Right cardiac atrium (tissue), 5 donors: ENCODE measurements at regions of chr20 and their contacts with region 1.

Region 1: GRCh38 chr20:49982346-49983122 is at the start of gene SNAI1:
- DNase-seq: peak; percentile 85 to 93 (median 92)
- ATAC-seq: peak; percentile 80 to 85
- H3K4me3 ChIP-seq: peak within 1 kb of the TSS; percentile 69
- H3K27ac ChIP-seq: peak within 1 kb of the TSS; percentile 31
- H3K4me1 ChIP-seq: peaks cover 1% of the 10 kb centered on the region
- H3K27me3 ChIP-seq: no peaks in the 10 kb centered on the region
- total RNA-seq, gene SNAI1: 2.9 to 6.0 (median 3.4) TPM

Region 2: DNA sequence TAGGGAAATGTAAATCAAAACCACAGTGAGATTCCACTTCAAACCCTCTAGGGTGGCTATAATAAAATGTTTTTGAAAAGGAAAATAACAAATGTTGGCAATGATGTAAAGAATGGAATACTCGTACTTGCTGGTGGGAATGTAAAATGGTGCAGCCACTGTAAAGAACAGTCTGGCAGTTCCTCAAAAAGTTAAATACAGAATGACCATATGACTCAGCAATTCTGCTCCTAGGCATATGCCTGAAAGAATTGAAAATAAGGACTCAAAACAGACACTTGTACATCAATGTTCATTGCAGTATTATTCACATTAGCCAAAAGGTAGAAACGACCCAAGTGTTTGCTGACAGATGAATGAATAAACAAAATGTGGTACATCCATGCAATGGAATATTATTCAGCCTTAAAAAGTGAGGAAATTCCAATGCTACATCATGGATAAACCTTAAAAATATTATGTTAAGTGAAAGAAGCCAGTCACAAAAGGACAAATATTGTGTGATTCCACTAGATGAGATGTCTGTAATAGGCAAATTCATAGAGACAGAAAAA is 56.6 kb before region 1 on chr20:
- intact Hi-C with region 1: no loop called
- DNase-seq: no peak
- ATAC-seq: no peak
- H3K4me3 ChIP-seq: no peak overlapping the region
- H3K27ac ChIP-seq: no peak overlapping the region
- H3K4me1 ChIP-seq: no peaks in the 10 kb centered on the region
- H3K27me3 ChIP-seq: no peaks in the 10 kb centered on the region

Region 3: GRCh38 chr20:50027611-50028105 is 45.1 kb after region 1 on chr20:
- intact Hi-C with region 1: loop called in 1 of 4 experiments (anchors 5 kb)
- DNase-seq: peak; percentile 93 to 94 (median 94)
- ATAC-seq: peak; percentile 81 to 84
- H3K4me3 ChIP-seq: no peak overlapping the region
- H3K27ac ChIP-seq: peak overlapping the region; percentile 26
- H3K4me1 ChIP-seq: peaks cover 11% of the 10 kb centered on the region
- H3K27me3 ChIP-seq: no peaks in the 10 kb centered on the region

Region 4: GRCh38 chr20:50054626-50055511 is 72.3 kb after region 1 on chr20:
- intact Hi-C with region 1: loop called in 1 of 4 experiments (anchors 5 kb)
- DNase-seq: peak; percentile 75 to 93 (median 92)
- ATAC-seq: peak; percentile 70 to 86
- H3K4me3 ChIP-seq: no peak overlapping the region
- H3K27ac ChIP-seq: no peak overlapping the region
- H3K4me1 ChIP-seq: peaks cover 3% of the 10 kb centered on the region
- H3K27me3 ChIP-seq: no peaks in the 10 kb centered on the region

Region 5: GRCh38 chr20:50070991-50071888 is 88.7 kb after region 1 on chr20:
- intact Hi-C with region 1: loop called (anchors 1 to 5 kb)
- DNase-seq: peak; percentile 91 to 97 (median 97)
- ATAC-seq: peak; percentile 93
- H3K4me3 ChIP-seq: peak overlapping the region; percentile 29
- H3K27ac ChIP-seq: no peak overlapping the region
- H3K4me1 ChIP-seq: no peaks in the 10 kb centered on the region
- H3K27me3 ChIP-seq: no peaks in the 10 kb centered on the region

Region 6: GRCh38 chr20:50165684-50166554 is 183.4 kb after region 1 on chr20:
- intact Hi-C with region 1: loop called in 3 of 4 experiments (anchors 10 kb)
- DNase-seq: peak; percentile 96 to 98 (median 98)
- ATAC-seq: peak; percentile 98
- H3K4me3 ChIP-seq: peak overlapping the region; percentile 23
- H3K27ac ChIP-seq: peak overlapping the region; percentile 99
- H3K4me1 ChIP-seq: no peaks in the 10 kb centered on the region
- H3K27me3 ChIP-seq: no peaks in the 10 kb centered on the region

Region 7: GRCh38 chr20:50172347-50173013 is 189.9 kb after region 1 on chr20:
- intact Hi-C with region 1: loop called (anchors 5 to 10 kb)
- DNase-seq: peak; percentile 90 to 96 (median 95)
- ATAC-seq: peak; percentile 96
- H3K4me3 ChIP-seq: peak overlapping the region; percentile 71
- H3K27ac ChIP-seq: peak overlapping the region; percentile 83
- H3K4me1 ChIP-seq: no peaks in the 10 kb centered on the region
- H3K27me3 ChIP-seq: no peaks in the 10 kb centered on the region

Region 8: DNA sequence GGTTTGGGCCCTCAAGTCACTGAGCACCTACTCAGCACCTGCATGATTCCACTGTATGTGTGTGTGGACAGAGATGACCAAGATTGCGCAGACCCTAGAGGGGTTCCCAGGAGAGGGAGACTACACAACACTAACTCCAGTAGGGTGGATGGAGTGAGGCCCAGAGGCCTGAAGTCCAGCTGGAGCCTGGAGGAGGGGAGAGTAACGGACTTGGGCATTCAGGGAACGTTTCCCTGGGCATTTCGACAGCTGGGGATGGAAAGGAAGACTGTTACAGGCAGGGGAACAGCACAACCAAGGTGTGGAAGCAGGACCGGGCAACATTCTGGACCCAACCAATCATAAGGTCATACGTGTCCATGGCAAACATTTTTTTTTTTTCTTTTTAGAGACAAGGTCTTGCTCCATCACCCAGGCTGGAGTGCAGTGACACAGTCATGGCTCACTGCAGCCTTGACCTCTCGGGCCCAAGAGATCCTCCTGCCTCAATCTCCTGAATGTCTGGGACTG is 197.0 kb after region 1 on chr20:
- intact Hi-C with region 1: loop called in 3 of 4 experiments (anchors 5 to 10 kb)
- DNase-seq: no peak
- ATAC-seq: peak; percentile 34 to 54
- H3K4me3 ChIP-seq: no peak overlapping the region
- H3K27ac ChIP-seq: no peak overlapping the region
- H3K4me1 ChIP-seq: no peaks in the 10 kb centered on the region
- H3K27me3 ChIP-seq: no peaks in the 10 kb centered on the region